Sciatic nerve (tissue), 2 donors: ENCODE measurements at regions of chr15 and their contacts with region 1.

Region 1: GRCh38 chr15:61421938-61422337 is 192.8 kb upstream of the RORA start:
- DNase-seq: no peak
- ATAC-seq: no peak

Region 2: DNA sequence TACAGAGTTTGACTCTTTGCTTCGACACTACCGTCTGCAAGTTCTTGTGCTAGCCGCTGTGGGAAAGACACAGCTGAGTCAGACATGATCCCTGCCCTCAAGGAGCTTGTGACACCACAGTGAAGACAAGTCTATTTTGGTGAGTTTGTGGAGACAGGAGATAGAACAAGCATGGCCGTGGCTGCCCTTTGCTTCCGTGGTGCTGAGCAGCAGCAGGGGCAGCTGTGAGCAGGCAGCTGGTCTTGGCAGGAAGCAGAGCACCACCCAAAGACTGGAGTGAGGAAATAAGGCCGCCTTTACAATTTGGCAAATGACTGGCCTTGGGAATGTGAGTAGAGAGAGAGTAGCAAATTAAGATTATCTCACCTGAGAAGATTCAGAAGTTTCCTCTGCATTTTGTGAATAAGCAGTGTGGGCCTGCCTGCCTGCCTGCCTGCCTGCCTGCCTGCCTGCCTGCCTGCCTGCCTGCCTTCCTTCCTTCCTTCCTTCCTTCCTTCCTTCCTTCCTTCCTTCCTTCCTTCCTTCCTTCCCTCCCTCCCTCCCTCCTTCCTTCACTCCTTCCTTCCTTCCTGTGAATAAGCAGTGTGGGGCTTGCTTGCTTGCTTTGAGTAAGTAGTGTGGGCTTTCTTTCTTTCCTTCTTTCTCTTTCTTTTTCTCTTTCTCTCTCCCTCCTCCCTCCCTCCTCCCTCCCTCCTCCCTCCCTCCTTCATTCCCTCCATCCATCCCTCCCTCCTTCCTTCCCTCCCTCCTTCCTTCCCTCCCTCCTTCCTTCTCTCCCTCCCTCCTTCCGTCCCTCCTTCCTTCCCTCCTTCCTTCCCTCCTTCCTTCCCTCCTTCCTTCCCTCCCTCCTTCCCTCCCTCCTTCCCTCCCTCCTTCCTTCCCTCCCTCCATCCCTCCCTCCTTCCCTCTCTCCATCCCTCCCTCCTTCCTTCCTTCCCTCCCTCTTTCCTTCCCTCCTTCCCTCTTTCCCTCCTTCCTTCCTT is 1811.9 kb before region 1 on chr15:
- intact Hi-C with region 1: loop called (anchors 5 kb)
- DNase-seq: no peak
- ATAC-seq: no peak

Region 3: DNA sequence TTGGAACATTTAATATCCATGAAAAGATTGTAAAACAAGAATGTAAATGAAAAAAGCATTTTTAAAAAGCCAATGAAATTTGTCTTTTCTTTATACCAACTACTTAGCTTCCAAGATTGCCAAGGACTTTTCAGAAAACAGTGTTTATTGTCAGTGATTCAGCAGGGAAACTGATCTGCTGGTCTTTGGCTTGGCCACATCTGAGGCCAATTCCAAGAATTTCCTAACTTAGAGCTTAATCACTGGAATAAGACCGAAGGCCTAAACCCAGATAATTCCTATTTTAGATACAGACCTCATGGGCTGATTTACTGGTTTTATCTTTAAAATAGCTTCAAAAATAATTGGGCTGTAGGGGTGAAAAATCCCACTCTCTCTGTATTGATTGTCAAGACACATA is 67.6 kb after region 1 on chr15:
- intact Hi-C with region 1: no loop called
- DNase-seq: no peak
- ATAC-seq: peak; percentile 89